Astrocyte of the cerebellum (primary cell): ENCODE measurements at regions of chr10 and their contacts with region 1.

Region 1: DNA sequence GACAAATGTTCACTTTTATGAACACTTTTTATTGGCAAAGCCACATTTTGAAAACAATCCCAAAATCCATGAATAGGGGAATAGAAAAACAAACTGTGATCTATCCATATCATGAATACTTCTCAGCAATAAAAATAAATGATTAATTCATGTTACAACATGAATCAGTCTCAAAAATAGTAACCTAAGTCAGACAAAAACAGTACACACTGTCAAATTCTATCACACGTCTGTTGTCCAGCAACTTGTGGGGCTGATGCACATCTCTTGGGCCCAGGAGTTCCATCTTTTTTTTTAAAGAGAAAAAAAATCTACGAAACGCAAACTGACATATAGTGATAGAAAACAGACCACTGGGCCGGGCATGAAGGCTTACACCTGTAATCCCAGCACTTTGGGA is 71.0 kb downstream of the LARP4B start:
- DNase-seq: no peak
- H3K4me3 ChIP-seq: no peak overlapping the region
- CTCF ChIP-seq: no peak

Region 2: GRCh38 chr10:904403-904802 is 43.9 kb after region 1 on chr10:
- in situ Hi-C with region 1: loop called (anchors 5 kb)
- DNase-seq: no peak
- H3K4me3 ChIP-seq: no peak overlapping the region
- CTCF ChIP-seq: no peak

Region 3: GRCh38 chr10:969470-970150 is 109.1 kb after region 1 on chr10:
- in situ Hi-C with region 1: loop called (anchors 5 kb)
- DNase-seq: no peak
- H3K4me3 ChIP-seq: no peak overlapping the region
- CTCF ChIP-seq: no peak